Activated CD4-positive, alpha-beta memory T cell treated with anti-CD3 and anti-CD28 coated beads for 36 hours (primary cell): ENCODE measurements at regions of chr3 and their contacts with region 1.

Region 1: GRCh38 chr3:112111785-112112402 is 21.2 kb downstream of the GCSAM start:
- DNase-seq: peak; percentile 71
- H3K4me3 Mint-ChIP-seq: no peak overlapping the region
- H3K27ac Mint-ChIP-seq: no peak overlapping the region
- H3K4me1 Mint-ChIP-seq: peaks cover 7% of the 10 kb centered on the region
- H3K27me3 Mint-ChIP-seq: no peaks in the 10 kb centered on the region

Region 2: DNA sequence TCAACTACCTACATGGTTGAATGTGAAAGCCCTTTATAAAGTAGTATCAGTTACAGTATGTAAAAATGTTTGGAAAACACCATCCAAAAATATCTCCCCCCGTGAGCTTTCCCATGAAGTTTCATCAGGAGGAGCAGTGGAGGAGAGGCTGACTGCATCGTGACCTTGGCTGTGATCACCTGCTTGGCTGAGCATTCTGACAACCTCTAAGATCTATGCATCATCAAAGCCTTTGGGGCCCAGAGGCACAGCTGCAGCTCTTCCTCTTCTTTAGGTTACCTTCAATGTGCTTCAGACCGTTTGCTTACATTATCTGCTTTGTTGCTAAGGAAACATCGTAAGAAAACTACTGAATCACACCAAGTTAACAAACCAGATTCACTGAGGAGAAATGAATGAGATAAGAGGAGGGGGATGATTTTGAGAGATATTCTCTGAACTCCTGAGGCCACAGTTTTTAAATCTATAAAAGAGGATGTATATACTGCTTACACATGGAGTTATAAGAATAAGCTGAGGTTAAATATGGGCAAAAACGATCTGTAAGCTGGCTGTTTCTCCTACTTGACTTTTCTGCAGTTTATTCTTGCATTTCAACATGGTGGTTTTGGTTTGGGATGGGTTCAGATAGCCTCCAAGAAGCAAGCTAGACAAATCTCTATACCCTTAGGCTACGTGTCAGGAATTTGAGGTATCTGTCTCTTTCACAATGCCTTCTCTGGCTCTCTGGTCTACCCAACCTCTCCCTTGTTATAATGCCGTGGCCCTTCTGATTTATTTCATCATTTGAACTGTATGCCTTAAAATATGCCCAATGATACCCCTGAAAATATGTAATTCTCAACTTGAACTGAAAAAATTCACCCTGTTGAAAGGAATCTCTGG is 17.2 kb after region 1 on chr3:
- CTCF ChIA-PET with region 1: interaction called, 42 read pairs
- POLR2A ChIA-PET with region 1: no interaction called
- intact Hi-C with region 1: loop called (anchors 1 kb)
- DNase-seq: peak; percentile 73
- H3K4me3 Mint-ChIP-seq: peak overlapping the region; percentile 30
- H3K27ac Mint-ChIP-seq: peak overlapping the region; percentile 88
- H3K4me1 Mint-ChIP-seq: peaks cover 82% of the 10 kb centered on the region
- H3K27me3 Mint-ChIP-seq: no peaks in the 10 kb centered on the region

Region 3: GRCh38 chr3:112303764-112304325 is 192.0 kb after region 1 on chr3:
- CTCF ChIA-PET with region 1: interaction called, 8 read pairs
- POLR2A ChIA-PET with region 1: no interaction called
- intact Hi-C with region 1: loop called (anchors 5 kb)
- DNase-seq: no peak
- H3K4me3 Mint-ChIP-seq: no peak overlapping the region
- H3K27ac Mint-ChIP-seq: no peak overlapping the region
- H3K4me1 Mint-ChIP-seq: peaks cover under 1% of the 10 kb centered on the region
- H3K27me3 Mint-ChIP-seq: no peaks in the 10 kb centered on the region

Region 4: DNA sequence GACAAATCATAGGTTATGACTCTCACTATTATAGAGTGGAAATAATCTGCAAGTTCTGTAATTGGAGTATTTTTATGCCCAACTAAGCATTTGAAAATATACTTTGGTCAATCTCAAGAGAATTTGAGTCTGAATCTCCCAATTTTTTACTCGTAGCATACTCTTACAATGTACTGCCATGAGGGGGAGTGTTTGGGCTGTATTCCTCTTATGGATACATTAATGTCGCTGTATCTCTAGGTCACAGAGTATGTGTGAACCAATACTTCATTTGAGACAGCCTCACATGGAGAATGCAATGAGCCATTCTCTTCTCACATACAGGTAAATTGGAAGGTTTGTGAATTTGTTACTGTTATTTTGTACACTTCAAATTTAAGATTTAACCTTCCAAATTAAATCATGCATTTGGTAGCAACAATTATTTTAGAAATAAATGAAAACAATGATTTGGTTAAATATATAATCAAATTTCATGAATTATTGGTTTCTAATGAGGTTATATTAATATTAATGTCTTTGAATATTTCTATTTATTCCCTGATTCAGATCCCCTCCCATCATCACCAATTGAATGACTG is 215.6 kb after region 1 on chr3:
- CTCF ChIA-PET with region 1: interaction called, 7 read pairs
- POLR2A ChIA-PET with region 1: no interaction called
- intact Hi-C with region 1: loop called (anchors 2 kb)
- DNase-seq: no peak
- H3K4me3 Mint-ChIP-seq: no peak overlapping the region
- H3K27ac Mint-ChIP-seq: no peak overlapping the region
- H3K4me1 Mint-ChIP-seq: peaks cover 5% of the 10 kb centered on the region
- H3K27me3 Mint-ChIP-seq: peaks cover 5% of the 10 kb centered on the region

Region 5: GRCh38 chr3:112371569-112371968 is 259.7 kb after region 1 on chr3:
- CTCF ChIA-PET with region 1: no interaction called
- POLR2A ChIA-PET with region 1: no interaction called
- intact Hi-C with region 1: no loop called
- DNase-seq: no peak
- H3K4me3 Mint-ChIP-seq: no peak overlapping the region
- H3K27ac Mint-ChIP-seq: no peak overlapping the region
- H3K4me1 Mint-ChIP-seq: peaks cover 12% of the 10 kb centered on the region
- H3K27me3 Mint-ChIP-seq: no peaks in the 10 kb centered on the region

Region 6: DNA sequence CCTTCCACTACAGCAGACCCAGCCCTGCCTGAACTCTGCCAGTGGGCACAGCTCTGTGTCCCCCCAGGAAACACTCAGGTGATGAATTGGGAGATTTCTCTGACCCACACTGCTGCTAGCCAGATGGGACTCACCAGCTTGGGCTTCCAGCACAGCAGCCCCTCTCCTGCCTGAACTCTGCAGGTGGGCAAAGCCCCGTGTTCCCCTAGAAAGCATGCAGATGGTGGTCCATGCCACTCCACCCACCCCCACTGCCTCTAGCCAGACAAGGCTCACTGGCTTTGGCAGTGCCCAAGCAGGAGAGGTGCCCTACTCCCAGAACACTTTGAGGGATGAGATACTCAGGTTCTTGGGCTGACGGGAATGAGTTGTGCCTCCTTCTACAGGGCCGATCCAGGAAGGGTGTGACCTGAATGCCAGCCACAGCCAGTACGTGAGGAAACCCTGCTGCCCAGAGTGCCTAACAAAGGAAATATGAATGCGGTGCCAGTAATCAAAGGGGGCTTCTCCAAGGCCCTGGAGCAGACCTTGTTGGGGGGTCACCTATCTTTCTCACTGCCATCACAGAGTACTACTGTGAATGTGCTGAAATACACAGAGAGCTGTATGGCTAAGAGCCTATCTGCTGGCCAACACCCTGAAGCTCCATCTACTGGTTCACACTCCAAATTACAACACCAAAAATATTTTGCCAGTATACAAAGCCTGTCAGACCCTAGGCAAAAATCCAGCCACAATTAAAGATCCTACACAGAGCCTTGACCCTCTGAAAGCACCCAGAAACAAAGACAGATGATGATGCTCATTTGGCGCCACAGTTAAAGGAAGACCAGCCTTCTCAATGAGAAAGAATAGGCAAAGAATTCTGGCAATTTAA is 325.5 kb after region 1 on chr3:
- CTCF ChIA-PET with region 1: interaction called, 18 read pairs
- POLR2A ChIA-PET with region 1: no interaction called
- intact Hi-C with region 1: no loop called
- DNase-seq: peak; percentile 21
- H3K4me3 Mint-ChIP-seq: no peak overlapping the region
- H3K27ac Mint-ChIP-seq: peak overlapping the region; percentile 40
- H3K4me1 Mint-ChIP-seq: peaks cover 40% of the 10 kb centered on the region
- H3K27me3 Mint-ChIP-seq: no peaks in the 10 kb centered on the region

Region 7: DNA sequence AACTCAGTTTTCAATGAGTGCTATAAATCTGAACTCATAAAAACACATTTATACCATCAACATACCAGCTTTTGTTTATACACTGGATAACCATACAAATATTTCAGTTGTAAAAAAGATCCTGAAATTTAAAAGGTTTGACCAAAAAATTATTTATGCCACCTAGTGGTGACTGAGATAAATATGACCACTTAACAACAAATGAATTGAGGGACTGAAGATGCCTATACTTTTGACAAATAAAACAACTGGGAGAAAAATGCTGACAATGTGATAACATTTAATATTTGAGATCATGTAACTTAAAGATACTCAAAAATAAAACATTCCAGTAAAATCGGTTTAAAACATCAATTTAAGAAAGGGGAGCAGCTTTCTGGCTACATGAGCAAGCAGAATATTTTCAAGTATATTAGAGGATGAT is 419.5 kb after region 1 on chr3:
- CTCF ChIA-PET with region 1: interaction called, 16 read pairs
- POLR2A ChIA-PET with region 1: no interaction called
- intact Hi-C with region 1: loop called (anchors 5 kb)
- DNase-seq: no peak
- H3K4me3 Mint-ChIP-seq: no peak overlapping the region
- H3K27ac Mint-ChIP-seq: no peak overlapping the region
- H3K4me1 Mint-ChIP-seq: peaks cover 7% of the 10 kb centered on the region
- H3K27me3 Mint-ChIP-seq: no peaks in the 10 kb centered on the region

Region 8: DNA sequence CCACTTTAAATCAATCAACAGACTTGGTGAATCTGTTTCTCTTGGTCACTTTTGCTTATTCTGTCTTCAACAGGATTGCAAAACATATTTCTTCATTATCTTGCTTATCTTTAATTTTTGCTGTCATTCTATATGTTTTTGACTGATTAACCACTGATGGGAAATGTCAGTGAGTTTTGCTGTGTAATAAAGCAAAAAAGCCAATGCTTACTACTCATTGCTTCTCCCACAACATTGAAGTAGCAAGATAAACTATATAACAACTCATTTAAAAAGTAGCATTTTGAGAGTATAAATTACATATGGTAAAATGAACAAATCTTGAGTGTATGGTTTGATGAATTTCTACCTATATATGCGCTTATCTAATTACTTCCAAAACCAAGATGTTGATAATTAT is 733.9 kb after region 1 on chr3:
- CTCF ChIA-PET with region 1: no interaction called
- POLR2A ChIA-PET with region 1: no interaction called
- intact Hi-C with region 1: no loop called
- DNase-seq: no peak
- H3K4me3 Mint-ChIP-seq: no peak overlapping the region
- H3K27ac Mint-ChIP-seq: no peak overlapping the region
- H3K4me1 Mint-ChIP-seq: peaks cover 30% of the 10 kb centered on the region
- H3K27me3 Mint-ChIP-seq: no peaks in the 10 kb centered on the region